ENCODE measurements at regions of chr6 and their contacts with region 1.

Region 1: DNA sequence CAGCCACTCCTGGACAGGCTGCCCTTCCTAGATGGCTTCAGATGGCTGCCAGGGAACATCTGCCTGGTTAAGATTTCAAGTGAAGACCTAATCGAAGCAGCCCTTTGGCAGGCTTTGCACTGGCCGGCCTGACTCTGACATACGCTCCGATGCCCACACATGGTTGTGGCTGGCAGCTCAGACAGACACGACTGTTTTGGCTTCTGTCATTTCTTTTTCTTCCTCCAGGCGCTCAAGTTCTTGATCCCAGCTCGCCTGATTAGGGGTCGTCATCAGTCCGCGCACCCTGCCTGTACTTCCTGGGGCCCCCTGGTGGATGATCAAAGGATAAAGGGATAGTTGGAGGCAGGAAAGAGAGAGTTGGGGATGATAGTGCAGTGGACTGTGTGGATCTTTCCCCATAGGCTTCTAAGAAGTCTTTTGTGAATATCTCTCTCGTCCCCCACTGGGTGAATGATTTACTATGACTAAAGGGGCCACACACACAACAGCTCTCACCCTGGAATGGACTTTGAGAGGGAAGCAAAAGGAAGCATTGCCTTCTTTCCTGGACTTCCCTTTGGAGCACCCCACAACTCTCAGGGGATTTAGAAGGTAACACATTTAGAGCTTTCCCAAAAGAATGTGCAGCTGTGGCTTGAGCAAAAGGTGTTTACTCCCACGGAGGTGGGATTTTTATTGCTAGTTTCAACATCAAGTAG is 21.4 kb upstream of the TRAM2 start:
- DNase-seq: peak; percentile 87 to 89 (median 89)
- ATAC-seq: peak; percentile 96
- H3K4me3 ChIP-seq: peak overlapping the region; percentile 3; the same call in 1 of the 2 replicates
- H3K27ac ChIP-seq: peak overlapping the region; percentile 29; the same call in 1 of the 3 replicates
- H3K4me1 ChIP-seq: peaks cover 0 to 17% of the 10 kb centered on the region in 2 experiments; a peak in 3 of 5 replicates
- H3K27me3 ChIP-seq: no peaks in the 10 kb centered on the region
- CTCF ChIP-seq: peak; percentile 93 to 98 (median 93)
- EP300 ChIP-seq: peak; percentile 35; the same call in 1 of the 2 replicates
- POLR2A ChIP-seq: peak; percentile 55; the same call in 1 of the 2 replicates
- RAD21 ChIP-seq: peak; percentile 68 to 79

Region 2: GRCh38 chr6:52503848-52504781 is 94.2 kb before region 1 on chr6:
- CTCF ChIA-PET with region 1: no interaction called
- POLR2A ChIA-PET with region 1: no interaction called
- in situ Hi-C with region 1: no loop called
- intact Hi-C with region 1: loop called (anchors 5 kb)
- DNase-seq: peak; percentile 90 to 92 (median 90)
- ATAC-seq: peak; percentile 95
- H3K4me3 ChIP-seq: no peak overlapping the region
- H3K27ac ChIP-seq: peak overlapping the region; percentile 73
- H3K4me1 ChIP-seq: peaks cover 33 to 49% of the 10 kb centered on the region in 2 experiments
- H3K27me3 ChIP-seq: no peaks in the 10 kb centered on the region
- CTCF ChIP-seq: no peak; a peak in 1 of 6 replicates
- EP300 ChIP-seq: peak; percentile 68; the same call in 1 of the 2 replicates
- POLR2A ChIP-seq: no peak; the same call in 1 of the 2 replicates
- RAD21 ChIP-seq: no peak; a peak in 1 of 4 replicates

Region 3: DNA sequence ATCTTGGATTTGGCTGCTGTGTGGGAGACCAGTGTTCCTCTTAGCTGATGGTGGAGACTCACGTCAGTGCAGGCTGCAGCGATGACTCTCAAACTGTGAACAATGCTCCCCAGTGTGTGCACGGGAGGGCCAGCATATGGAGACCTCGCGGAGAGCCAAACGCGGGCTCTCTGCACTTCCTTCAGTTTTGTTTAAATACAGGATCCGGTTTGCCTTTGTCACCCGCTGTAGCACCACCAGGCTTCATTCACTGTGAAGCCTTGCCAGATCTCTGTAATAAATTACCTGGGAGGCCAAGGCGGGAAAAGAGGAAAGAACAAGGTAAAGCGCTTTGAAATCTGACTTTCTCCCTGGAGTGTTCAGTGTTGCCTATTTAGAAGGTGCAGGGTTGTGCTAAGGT is 41.9 kb after region 1 on chr6:
- CTCF ChIA-PET with region 1: no interaction called
- POLR2A ChIA-PET with region 1: no interaction called
- in situ Hi-C with region 1: no loop called
- intact Hi-C with region 1: loop called (anchors 5 kb)
- DNase-seq: peak in 1 of 4 experiments; percentile 17
- ATAC-seq: peak; percentile 53
- H3K4me3 ChIP-seq: no peak overlapping the region
- H3K27ac ChIP-seq: no peak overlapping the region
- H3K4me1 ChIP-seq: peaks cover 9 to 35% of the 10 kb centered on the region in 2 experiments
- H3K27me3 ChIP-seq: no peaks in the 10 kb centered on the region
- CTCF ChIP-seq: no peak
- EP300 ChIP-seq: no peak
- POLR2A ChIP-seq: no peak
- RAD21 ChIP-seq: no peak